Posterior vena cava (tissue), 2 donors: ENCODE measurements at regions of chr15 and their contacts with region 1.

Region 1: GRCh38 chr15:55372701-55373440 is 35.3 kb downstream of the CCPG1 start:
- DNase-seq: no peak

Region 2: DNA sequence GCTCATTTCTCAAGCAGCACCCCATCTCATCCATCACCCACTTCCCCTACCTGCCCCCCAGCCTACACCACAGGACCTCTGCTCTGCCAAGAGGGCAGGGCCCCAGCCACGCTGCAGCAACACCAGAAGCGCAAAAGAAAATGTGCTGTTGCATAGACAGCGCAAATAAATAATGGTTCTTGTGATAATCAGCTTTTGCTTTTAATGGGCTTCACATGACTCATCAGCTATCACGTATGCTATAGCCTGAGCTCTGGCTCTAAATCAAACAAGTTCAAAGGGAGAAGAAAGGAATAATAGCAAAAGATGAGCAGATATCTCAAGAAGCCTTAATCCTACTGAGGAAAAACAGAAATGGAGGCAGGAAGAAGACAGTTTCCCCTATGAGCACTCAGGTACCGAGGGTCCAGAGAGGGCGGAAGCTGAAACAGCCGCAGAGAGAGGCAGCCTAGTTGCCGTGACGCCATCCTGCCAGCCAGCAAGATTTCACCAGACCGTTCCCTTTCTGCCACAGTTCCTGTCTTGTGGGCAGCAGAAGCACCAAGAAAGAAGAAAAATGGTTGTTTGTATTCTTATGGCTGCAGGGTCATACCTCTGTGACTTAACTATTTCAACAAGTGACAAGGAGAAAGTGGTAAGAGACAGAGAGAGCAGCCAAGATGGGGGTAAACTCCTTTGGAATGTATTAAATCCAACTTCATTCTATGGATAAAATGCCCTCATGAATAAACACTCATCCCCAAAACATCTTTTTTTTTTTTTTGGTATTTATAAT is 105.3 kb before region 1 on chr15:
- intact Hi-C with region 1: no loop called
- DNase-seq: no peak

Region 3: DNA sequence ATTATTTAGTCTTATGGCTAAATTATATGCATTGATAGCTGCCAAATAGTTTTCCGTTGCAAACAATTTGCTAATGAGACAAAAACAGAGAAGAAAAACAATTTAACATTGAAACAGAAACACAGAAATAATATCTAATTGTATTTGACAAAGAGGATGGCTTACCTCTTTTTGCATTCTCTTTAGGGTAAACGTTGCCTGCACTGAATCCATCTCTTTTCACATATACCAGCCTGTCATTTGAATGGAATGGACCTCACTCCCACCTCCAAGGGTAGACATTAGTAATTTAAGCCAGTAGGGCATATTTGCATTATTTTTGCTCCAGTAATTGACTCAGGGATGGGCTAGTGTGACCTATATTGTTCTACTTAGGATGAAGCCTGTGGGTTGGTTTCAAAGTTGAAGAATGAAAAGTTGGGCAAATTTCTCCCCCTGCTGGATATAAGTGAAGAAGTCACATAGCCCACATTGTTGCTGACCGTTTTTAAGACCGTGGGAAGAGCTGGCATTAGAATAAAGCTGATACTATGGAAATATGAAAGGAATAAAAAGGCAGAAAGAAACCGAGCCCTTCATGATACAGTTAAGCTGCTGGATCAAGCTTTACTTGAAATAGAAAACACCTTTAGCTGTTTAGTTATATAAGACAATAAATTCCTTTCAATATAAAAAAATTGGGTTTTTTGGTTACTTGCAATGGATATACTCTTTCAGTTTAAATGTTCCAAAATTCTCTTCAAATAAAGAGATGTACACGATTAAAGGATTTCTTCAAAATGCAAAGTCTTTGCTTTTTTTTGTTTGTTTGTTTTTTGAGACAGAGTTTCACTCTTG is 62.3 kb after region 1 on chr15:
- intact Hi-C with region 1: loop called in 1 of 2 experiments (anchors 2 kb)
- DNase-seq: no peak